ENCODE measurements at regions of chr15 and their contacts with region 1.

Region 1: GRCh38 chr15:34318277-34319079 is 19.1 kb downstream of the SLC12A6 start:
- DNase-seq: peak in 5 of 10 donors; percentile 11 to 40 (median 26)
- ATAC-seq: peak; percentile 78 to 79
- H3K4me3 Mint-ChIP-seq: peak overlapping the region; percentile 91 to 100 (median 98)
- H3K27ac Mint-ChIP-seq: peak overlapping the region; percentile 85 to 99 (median 96)
- H3K4me1 Mint-ChIP-seq: peaks cover 26 to 70% (median 58%) of the 10 kb centered on the region in 4 donors
- H3K27me3 Mint-ChIP-seq: no peaks in the 10 kb centered on the region

Region 2: DNA sequence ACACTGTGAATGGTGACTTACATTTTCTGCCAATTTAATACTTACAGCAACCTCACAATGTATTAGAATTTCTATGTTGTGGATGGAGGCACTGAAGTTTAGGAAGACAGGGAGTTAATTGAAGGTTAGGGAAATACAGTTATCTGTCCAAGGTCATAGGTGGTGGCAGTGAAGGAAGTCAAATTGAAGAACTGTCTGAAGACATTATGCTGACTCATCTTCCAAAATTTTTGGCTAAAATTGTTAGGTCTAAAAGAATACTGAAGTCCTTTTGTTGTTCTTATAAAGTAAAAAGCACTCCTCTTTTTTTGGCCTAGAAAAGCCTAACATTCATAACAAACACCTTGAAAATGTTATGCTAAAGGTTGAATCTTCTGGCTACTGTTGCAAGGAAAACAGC is 65.9 kb before region 1 on chr15:
- POLR2A ChIA-PET with region 1: no interaction called
- DNase-seq: no peak
- ATAC-seq: no peak
- H3K4me3 Mint-ChIP-seq: no peak overlapping the region
- H3K27ac Mint-ChIP-seq: peak overlapping the region in 1 of 10 donors; percentile 3
- H3K4me1 Mint-ChIP-seq: peaks cover 0 to 4% (median under 1%) of the 10 kb centered on the region in 4 donors
- H3K27me3 Mint-ChIP-seq: no peaks in the 10 kb centered on the region

Region 3: GRCh38 chr15:34266751-34267150 is 51.7 kb before region 1 on chr15:
- POLR2A ChIA-PET with region 1: no interaction called
- DNase-seq: no peak
- ATAC-seq: no peak
- H3K4me3 Mint-ChIP-seq: no peak overlapping the region
- H3K27ac Mint-ChIP-seq: peak overlapping the region in 5 of 10 donors; percentile 16 to 69 (median 28)
- H3K4me1 Mint-ChIP-seq: peaks cover 6 to 11% (median 9%) of the 10 kb centered on the region in 4 donors
- H3K27me3 Mint-ChIP-seq: no peaks in the 10 kb centered on the region

Region 4: GRCh38 chr15:34337557-34338306 is 19.3 kb after region 1 on chr15 and contains the start of gene SLC12A6:
- POLR2A ChIA-PET with region 1: interaction called, 215 read pairs
- DNase-seq: peak; percentile 86 to 93 (median 91)
- ATAC-seq: peak; percentile 78 to 82
- H3K4me3 Mint-ChIP-seq: peak within 1 kb of the TSS; percentile 91 to 100 (median 99)
- H3K27ac Mint-ChIP-seq: peak within 1 kb of the TSS; percentile 90 to 99 (median 97)
- H3K4me1 Mint-ChIP-seq: peaks cover 23 to 73% (median 57%) of the 10 kb centered on the region in 4 donors
- H3K27me3 Mint-ChIP-seq: no peaks in the 10 kb centered on the region
- polyA plus RNA-seq, gene SLC12A6: 4.0 to 13.3 (median 7.3) TPM

Region 5: DNA sequence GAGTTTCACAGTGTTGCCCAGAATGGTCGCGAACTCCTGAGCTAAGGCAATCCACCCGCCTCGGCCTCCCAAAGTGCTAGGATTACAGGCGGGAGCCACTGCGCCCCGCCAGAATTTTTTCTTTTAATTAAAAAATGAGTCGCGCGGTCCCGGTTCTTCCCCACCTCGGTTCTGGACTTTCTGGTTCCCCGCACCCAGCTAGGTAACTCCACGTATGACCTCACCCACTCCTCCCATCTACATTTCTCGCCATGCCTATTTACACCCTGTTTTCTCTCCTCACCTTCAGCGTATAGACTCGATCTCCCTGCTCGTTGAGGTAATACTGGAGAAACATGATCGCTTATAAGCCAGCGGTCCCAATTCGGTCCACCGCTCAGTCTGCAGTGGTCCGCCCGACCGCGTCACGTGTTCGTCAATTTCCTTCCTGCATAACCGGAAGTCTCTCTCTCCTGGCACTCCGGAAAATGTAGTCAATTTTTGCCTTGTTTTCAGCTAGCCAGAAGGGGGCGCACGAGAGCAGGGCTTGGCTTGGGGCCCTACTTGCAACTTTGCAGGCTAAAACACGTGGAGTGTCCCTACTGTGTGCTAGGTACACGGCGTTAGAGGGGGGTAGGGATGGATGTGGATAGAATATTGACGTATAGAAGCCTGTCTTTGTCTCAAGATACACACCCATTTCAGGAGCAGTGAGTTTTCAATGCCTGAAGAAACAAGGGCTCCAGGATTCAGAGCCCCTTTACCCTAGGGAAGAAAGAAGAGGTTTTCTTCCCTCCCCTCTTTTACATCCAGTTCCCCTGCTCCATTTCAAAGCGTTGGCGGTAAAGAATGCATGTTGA is 24.5 kb after region 1 on chr15 and contains the starts of genes NOP10 and NUTM1:
- POLR2A ChIA-PET with region 1: interaction called, 215 read pairs
- DNase-seq: peak; percentile 84 to 95 (median 93)
- ATAC-seq: peak; percentile 85 to 87
- H3K4me3 Mint-ChIP-seq: no peak within 1 kb of the TSS
- H3K27ac Mint-ChIP-seq: peak within 1 kb of the TSS in 8 of 10 donors; percentile 12 to 90 (median 84)
- H3K4me1 Mint-ChIP-seq: peaks cover 6 to 30% (median 27%) of the 10 kb centered on the region in 4 donors
- H3K27me3 Mint-ChIP-seq: no peaks in the 10 kb centered on the region
- polyA plus RNA-seq, gene NOP10: 239 to 320 (median 257) TPM
- polyA plus RNA-seq, gene NUTM1: not detected

Region 6: DNA sequence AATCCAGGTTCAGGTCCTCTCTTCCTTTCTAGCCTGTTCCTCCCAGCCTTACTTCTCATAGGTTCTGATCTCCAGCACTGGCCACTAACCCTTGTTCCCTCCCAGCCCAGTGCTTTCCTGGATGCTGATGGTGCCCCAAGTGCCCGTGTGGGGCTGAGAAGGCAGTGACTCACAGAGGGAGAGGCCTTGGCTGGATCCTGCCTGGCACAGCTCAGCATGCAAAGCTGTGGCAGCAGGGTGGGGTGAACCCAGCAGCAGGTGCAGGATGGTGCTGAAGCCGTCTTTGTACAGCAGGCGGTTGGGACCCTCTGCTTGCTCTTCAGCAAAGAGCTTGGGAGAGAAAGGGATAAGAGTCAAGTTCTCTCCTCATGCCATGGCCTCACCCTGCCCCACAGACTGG is 40.9 kb after region 1 on chr15:
- POLR2A ChIA-PET with region 1: no interaction called
- DNase-seq: no peak
- ATAC-seq: no peak
- H3K4me3 Mint-ChIP-seq: no peak overlapping the region
- H3K27ac Mint-ChIP-seq: peak overlapping the region in 4 of 10 donors; percentile 17 to 64 (median 44)
- H3K4me1 Mint-ChIP-seq: peaks cover 0 to 4% (median 0%) of the 10 kb centered on the region in 4 donors
- H3K27me3 Mint-ChIP-seq: no peaks in the 10 kb centered on the region

Measured in naive thymus-derived CD8-positive, alpha-beta T cell (primary cell).